Gastrocnemius medialis (tissue), 4 donors: ENCODE measurements at regions of chr1 and their contacts with region 1.

Region 1: DNA sequence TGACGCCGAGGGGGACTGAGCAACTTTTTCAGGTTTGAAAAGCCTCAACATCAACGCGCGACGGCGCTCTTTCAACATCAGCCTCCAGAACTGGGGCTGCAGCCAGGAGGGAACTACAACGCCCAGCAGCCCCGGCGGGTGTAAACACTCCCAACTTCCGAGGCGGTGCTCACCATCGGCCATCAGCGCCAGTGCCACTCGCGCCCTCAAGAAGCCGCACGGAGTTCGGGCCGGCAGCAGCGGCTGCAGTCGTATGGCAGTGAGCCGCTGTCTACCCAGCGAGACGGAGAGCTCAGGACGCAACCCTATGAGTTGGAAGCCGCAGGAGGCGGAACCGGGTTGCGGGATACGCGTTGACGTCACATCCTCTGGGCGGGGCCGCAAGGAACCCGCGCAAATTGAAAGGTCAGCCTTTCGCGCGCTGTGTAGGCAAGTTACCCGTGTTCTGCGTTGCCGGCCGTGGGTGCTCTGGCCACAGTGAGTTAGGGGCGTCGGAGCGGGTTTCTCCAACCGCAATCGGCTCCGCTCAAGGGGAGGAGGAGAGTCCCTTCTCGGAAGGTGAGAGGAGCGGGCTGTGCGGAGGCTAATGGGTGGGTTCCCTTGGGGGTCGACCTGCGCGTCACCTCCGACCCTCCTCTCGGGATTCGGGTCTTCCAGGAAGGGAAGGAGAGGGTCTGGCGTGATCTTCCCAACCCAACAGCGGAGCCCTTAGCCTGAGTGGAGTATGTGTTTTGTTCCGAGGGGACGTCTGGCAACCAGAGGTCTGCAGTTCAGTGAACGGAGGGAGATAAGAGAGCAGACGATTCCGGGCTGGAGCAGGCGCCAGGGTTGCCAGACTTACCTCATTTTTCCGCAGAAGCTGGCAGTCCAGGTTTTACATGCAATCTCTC is at the start of gene EXO1:
- DNase-seq: peak; percentile 65 to 73
- ATAC-seq: peak; percentile 97 to 98
- H3K4me3 ChIP-seq: peak within 1 kb of the TSS; percentile 86 to 99 (median 96)
- H3K27ac ChIP-seq: peak within 1 kb of the TSS; percentile 96 to 99 (median 97)
- H3K4me1 ChIP-seq: peaks cover 5 to 14% of the 10 kb centered on the region in 2 donors
- H3K27me3 ChIP-seq: no peaks in the 10 kb centered on the region
- CTCF ChIP-seq: peak in 1 of 5 experiments; percentile 10
- POLR2A ChIP-seq: no peak
- total RNA-seq, gene EXO1: 0.20 TPM in 2 of 4 donors, not detected in the others

Region 2: DNA sequence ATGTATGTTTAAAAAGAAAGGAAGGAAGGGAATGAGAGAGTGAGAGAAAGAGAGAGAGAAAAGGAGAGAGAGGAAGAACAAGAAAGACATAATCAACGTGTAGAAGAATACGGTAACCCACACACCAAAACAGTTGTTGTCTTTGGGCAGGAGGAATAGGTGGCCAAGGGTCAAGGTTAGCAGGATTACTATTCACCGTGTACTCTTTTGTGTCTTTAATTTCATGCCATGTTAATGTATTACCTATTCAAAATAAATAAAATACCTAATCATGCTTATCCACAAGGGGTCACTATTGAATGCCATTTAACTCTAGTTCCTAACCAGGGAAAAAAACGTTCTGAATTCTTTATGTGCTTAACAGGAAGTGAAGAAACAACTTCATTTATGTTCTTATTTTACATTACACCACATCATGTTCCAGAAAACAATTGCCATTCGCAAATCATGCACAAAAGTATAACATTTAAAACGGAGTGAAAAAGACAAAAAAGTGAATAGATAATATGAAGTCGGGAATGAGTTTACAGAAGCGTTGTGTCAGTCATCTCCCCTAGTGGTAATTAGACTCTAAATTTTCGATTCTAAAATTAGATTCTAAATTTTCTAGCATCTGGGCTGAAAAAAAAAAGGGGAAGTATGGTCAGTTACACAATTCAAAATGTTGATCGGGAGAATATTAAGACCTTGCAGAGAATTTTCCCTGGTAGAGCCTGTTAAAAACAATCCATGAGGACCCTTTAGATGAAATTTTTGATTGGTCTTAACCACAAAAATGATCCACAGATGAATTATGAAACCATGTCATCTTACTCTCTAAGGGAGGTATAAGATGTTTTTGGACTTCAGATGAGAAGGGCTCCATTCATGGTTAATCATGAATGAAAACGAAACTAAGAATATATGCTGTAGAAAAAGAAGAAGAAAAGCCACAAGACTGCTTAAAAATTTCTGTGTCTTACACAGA is 316.6 kb before region 1 on chr1:
- in situ Hi-C with region 1: loop called in 1 of 4 experiments (anchors 25 kb)
- intact Hi-C with region 1: no loop called
- DNase-seq: no peak
- ATAC-seq: peak; percentile 69 to 91
- H3K4me3 ChIP-seq: peak overlapping the region; percentile 55 to 59 (median 58)
- H3K27ac ChIP-seq: peak overlapping the region in 2 of 4 donors; percentile 1 to 6
- H3K4me1 ChIP-seq: peaks cover 0 to 4% of the 10 kb centered on the region in 2 donors
- H3K27me3 ChIP-seq: no peaks in the 10 kb centered on the region
- CTCF ChIP-seq: peak in 4 of 5 experiments; percentile 24 to 58 (median 44)
- POLR2A ChIP-seq: no peak

Region 3: DNA sequence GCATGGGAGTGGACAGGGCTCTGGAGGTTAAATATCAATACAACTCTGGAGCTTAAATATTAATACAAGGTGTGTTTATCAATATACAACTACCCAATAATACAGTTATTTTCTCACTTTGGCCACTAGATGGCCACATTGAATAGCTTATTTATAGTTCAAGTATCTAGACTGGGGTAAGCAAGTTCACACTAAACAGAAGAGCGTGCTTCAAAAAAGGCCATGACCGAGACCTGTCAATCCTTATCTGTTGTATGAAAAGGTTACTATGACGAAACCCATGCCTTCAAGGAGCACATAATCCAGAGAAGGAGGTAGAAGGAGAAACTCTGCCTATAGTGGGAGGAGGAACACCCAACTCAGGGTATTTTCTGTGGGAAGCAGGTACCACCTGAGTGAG is 237.0 kb before region 1 on chr1:
- in situ Hi-C with region 1: loop called in 2 of 4 experiments (anchors 25 kb)
- intact Hi-C with region 1: loop called (anchors 5 kb)
- DNase-seq: no peak
- ATAC-seq: peak; percentile 78 to 84
- H3K4me3 ChIP-seq: no peak overlapping the region
- H3K27ac ChIP-seq: no peak overlapping the region
- H3K4me1 ChIP-seq: no peaks in the 10 kb centered on the region
- H3K27me3 ChIP-seq: no peaks in the 10 kb centered on the region
- CTCF ChIP-seq: peak; percentile 61 to 85 (median 69)
- POLR2A ChIP-seq: no peak

Region 4: DNA sequence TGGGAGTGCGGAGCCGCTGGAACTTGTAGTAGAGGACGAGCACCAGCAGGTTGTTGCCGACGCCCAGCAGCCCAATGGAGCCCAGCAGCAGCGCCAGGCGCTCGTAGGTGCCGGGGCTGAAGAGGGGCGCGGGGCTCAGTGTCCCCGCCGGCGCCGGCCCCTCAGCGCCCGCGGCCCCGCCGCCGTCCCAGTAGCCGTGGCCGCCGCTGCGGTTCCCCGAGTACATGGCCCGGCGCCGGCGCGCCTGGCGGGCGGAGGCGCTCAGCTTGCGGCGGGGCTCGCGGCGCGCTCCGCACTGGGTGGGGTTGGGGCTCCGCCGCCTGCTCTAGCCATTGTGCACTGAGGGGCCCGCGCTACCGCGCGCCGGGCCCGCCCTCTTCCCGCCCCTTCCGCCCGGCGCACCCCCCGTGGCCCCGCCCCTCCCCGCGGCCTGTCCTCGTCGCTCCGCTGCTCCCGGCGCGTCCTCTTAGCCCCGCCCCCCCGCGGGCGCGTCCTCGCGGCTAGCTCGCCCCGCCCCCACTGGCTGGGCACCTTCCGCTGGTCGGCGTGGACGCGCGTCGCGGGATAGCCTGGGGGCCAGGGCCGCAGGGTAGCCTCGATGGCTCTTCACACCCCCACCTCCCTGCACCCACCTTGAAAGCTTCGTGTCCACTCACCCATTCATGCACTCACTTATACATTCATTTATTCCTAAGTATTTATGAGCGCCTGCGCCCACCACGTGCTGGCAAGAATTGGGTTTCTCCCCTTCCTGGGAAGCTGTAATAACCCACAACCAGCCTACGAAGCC is 207.8 kb before region 1 on chr1 and contains the starts of genes CHML and OPN3:
- in situ Hi-C with region 1: loop called in 2 of 4 experiments (anchors 25 kb)
- intact Hi-C with region 1: loop called (anchors 5 kb)
- DNase-seq: peak; percentile 86 to 90
- ATAC-seq: peak; percentile 92 to 94
- H3K4me3 ChIP-seq: peak within 1 kb of the TSS; percentile 83 to 91 (median 84)
- H3K27ac ChIP-seq: peak within 1 kb of the TSS; percentile 72 to 88 (median 77)
- H3K4me1 ChIP-seq: peaks cover 11 to 23% of the 10 kb centered on the region in 2 donors
- H3K27me3 ChIP-seq: no peaks in the 10 kb centered on the region
- CTCF ChIP-seq: peak in 1 of 5 experiments; percentile 10
- POLR2A ChIP-seq: peak; percentile 81 to 89
- total RNA-seq, gene CHML: 3.2 to 6.5 (median 4.8) TPM
- total RNA-seq, gene OPN3: 4.6 to 9.6 (median 5.8) TPM